ENCODE measurements at regions of chr1 and their contacts with region 1.

Region 1: DNA sequence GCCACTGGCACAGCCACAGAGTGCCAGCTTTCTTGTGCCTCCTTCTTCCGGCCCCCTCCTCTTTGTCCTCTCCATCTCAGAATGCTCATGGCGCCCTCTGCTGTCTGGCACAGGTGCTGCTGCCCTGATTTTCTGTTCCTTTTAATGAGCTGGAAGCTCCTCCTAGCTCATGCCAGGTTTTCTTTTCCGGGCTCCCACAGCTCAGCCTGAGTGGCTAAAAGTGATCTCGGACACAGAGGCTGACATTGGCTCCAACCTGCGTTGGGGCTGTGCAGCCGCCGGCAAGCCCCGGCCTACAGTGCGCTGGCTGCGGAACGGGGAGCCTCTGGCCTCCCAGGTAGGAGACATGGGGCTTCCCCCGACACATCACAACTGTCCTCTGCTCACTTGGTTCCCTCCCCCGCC is 18.7 kb downstream of the CNTN2 start:
- DNase-seq: peak; percentile 71
- H3K4me3 ChIP-seq: no peak overlapping the region
- H3K27ac ChIP-seq: no peak overlapping the region
- H3K4me1 ChIP-seq: no peaks in the 10 kb centered on the region
- H3K27me3 ChIP-seq: peaks cover 0 to 2% of the 10 kb centered on the region in 2 experiments
- CTCF ChIP-seq: peak; percentile 80 to 89
- POLR2A ChIP-seq: no peak

Region 2: DNA sequence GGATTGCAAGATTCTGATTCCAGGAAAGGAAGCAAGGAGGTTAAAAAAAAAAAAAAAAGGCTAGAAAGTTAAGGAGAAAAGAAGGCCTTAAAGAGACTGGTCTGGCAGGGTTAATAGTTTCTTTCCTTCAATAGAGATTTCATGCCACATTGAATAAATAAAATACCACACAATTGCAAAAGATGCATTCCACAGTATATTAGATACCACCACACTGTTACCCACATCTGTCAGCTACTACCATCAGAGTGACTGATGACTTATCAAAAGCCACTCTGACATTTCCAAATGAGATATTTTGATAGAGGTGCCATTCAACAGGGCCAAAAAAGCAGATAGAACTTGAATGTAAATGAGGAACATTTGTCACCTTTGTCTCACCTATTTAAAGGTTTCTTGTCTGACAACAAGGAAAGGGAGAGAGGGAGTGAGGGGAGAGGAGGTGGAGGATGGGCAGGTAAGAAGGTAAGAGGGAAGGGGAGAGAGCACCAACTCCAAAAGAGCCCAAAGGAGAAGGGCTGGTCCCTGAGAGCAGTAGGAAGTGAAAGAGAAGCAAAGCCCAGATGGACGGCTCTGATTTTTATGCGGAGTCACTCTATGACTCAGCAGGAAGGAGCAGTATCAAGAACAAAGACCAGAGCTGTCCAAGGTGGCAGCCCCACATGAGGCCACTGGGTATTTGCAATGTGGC is 414.4 kb before region 1 on chr1:
- CTCF ChIA-PET with region 1: no interaction called
- POLR2A ChIA-PET with region 1: no interaction called
- dilution Hi-C with region 1: no loop called
- intact Hi-C with region 1: no loop called
- DNase-seq: peak; percentile 58
- H3K4me3 ChIP-seq: no peak overlapping the region
- H3K27ac ChIP-seq: no peak overlapping the region
- H3K4me1 ChIP-seq: no peaks in the 10 kb centered on the region
- H3K27me3 ChIP-seq: peaks cover 10 to 14% of the 10 kb centered on the region in 2 experiments
- CTCF ChIP-seq: no peak
- POLR2A ChIP-seq: no peak

Region 3: DNA sequence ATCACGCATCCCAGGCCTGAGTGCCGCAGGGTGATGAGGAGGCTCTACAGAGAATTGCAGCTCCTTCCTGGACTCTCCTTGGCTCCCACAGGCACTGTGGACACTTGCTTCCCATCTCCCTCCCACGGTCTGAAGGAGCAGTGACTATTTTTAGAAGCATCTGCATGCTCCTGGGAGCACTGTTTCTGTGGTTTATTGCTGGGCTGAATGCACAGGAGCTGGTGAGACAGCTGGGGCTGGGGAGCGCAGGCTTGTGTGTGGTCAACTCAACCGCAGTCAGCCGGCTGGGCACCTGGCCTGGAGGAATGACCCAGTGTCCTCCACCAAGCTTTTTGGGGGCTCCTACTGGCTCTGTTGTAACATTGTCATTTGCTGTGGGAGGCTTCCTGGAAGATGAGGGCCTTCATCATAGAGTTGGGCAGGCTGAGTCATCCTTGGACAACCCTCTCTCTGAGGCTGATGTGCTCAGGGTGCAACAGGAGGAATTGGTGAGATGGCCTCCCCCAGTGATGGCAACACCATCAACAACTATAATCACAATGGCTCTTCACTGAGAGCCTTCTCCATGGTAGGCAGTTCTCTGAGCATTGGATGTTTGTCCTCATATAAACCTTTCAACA is 189.3 kb before region 1 on chr1:
- CTCF ChIA-PET with region 1: no interaction called
- POLR2A ChIA-PET with region 1: no interaction called
- dilution Hi-C with region 1: no loop called
- intact Hi-C with region 1: no loop called
- DNase-seq: no peak
- H3K4me3 ChIP-seq: no peak overlapping the region
- H3K27ac ChIP-seq: no peak overlapping the region
- H3K4me1 ChIP-seq: no peaks in the 10 kb centered on the region
- H3K27me3 ChIP-seq: peaks cover 0 to 2% of the 10 kb centered on the region in 2 experiments
- CTCF ChIP-seq: no peak
- POLR2A ChIP-seq: no peak

Region 4: GRCh38 chr1:204902671-204903070 is 159.0 kb before region 1 on chr1:
- CTCF ChIA-PET with region 1: no interaction called
- POLR2A ChIA-PET with region 1: no interaction called
- dilution Hi-C with region 1: no loop called
- intact Hi-C with region 1: no loop called
- DNase-seq: no peak
- H3K4me3 ChIP-seq: no peak overlapping the region
- H3K27ac ChIP-seq: no peak overlapping the region
- H3K4me1 ChIP-seq: no peaks in the 10 kb centered on the region
- H3K27me3 ChIP-seq: peaks cover 2 to 4% of the 10 kb centered on the region in 2 experiments
- CTCF ChIP-seq: no peak
- POLR2A ChIP-seq: no peak

Region 5: GRCh38 chr1:204975570-204976235 is 86.0 kb before region 1 on chr1:
- CTCF ChIA-PET with region 1: interaction called, 101 read pairs
- POLR2A ChIA-PET with region 1: no interaction called
- dilution Hi-C with region 1: no loop called
- intact Hi-C with region 1: loop called (anchors 1 kb)
- DNase-seq: peak; percentile 31
- H3K4me3 ChIP-seq: no peak overlapping the region
- H3K27ac ChIP-seq: no peak overlapping the region
- H3K4me1 ChIP-seq: peaks cover 14% of the 10 kb centered on the region
- H3K27me3 ChIP-seq: peaks cover 0 to 2% of the 10 kb centered on the region in 2 experiments
- CTCF ChIP-seq: peak; percentile 62 to 73
- POLR2A ChIP-seq: no peak

Region 6: GRCh38 chr1:205014783-205015182 is 46.9 kb before region 1 on chr1:
- CTCF ChIA-PET with region 1: interaction called, 20 read pairs
- POLR2A ChIA-PET with region 1: no interaction called
- dilution Hi-C with region 1: no loop called
- intact Hi-C with region 1: no loop called
- DNase-seq: no peak
- H3K4me3 ChIP-seq: no peak overlapping the region
- H3K27ac ChIP-seq: no peak overlapping the region
- H3K4me1 ChIP-seq: no peaks in the 10 kb centered on the region
- H3K27me3 ChIP-seq: peaks cover 3% of the 10 kb centered on the region in 2 experiments
- CTCF ChIP-seq: no peak
- POLR2A ChIP-seq: no peak

Region 7: DNA sequence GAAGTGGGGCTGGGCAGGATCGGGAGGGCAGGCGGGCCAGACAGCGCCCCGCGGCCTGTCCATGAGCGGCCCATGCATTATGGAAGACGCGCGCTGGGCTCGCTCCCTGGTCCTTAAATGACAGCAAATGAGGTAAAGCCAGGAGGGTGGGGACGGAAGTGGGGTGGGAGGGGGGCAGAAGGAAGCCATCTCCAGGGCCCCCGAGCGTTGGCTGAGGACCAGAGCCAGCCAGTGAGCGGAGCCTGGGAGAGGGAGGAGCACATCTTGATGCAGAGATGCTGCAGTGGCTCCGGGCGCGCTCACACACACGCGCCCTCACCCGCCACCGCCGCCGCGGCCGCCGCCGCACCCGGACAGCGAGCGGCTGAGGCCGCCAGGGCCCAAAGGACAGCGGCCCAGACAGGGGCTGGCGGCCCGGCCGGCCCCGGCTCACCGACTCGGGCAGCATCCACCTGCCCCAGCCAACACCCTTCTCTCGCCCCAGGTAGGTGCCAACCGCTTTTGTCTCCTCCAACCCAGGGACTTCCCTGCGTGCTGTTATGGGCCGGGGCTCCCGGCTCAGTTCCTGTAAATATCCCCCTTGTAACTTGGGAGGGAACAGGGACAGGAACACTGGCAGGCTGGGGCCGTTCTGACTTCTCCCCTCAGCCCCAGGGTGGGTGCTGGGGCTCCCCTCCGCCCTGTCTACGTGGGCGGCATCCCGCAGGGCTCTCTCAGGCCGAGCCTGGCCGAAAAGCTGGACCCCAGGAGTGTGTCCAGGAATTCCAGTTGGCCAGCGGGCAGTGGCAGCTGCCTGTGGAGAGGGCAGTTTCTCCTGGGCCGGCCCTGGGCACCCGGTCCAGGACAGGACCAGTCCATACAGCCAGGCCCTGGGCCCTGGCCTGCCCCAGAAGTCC is 18.5 kb before region 1 on chr1 and contains the start of gene CNTN2:
- CTCF ChIA-PET with region 1: interaction called, 24 read pairs
- POLR2A ChIA-PET with region 1: no interaction called
- dilution Hi-C with region 1: no loop called
- intact Hi-C with region 1: no loop called
- DNase-seq: no peak
- H3K4me3 ChIP-seq: no peak within 1 kb of the TSS
- H3K27ac ChIP-seq: no peak within 1 kb of the TSS
- H3K4me1 ChIP-seq: no peaks in the 10 kb centered on the region
- H3K27me3 ChIP-seq: peaks cover 37 to 51% of the 10 kb centered on the region in 2 experiments
- CTCF ChIP-seq: no peak
- POLR2A ChIP-seq: no peak
- total RNA-seq, gene CNTN2: not detected in 2 replicates

Region 8: DNA sequence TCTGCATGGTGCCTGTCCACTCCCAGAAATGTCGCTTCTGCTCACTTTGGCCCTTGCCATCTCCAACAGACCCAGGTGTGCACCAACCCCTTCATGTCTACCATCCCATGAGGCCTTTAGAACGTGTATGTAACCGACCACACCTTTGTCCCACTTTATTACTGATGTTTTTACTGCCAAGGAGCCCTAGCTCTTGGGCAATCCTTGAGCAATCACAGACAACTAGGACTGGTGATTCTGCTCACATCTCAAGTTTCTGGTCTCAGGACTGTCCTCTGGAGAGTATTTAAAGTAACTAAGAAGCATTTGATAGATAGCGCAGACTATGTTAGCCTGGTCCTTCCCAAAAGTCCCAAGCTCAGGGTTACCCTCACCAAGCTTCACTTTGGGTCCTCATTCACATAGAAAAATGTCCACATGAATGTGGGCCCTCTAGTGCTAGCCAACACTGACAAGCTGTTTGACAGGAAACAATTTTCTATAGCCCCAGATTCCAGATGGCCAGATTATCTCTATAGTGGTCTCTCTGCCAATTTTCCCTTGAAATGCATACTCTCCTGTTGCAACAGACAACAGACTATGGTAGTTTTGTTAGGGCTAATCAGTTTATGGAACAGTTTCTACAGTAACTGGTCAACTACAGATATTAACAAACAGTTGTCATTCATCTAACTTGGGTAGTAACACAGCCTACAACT is 29.5 kb after region 1 on chr1:
- CTCF ChIA-PET with region 1: interaction called, 24 read pairs
- POLR2A ChIA-PET with region 1: no interaction called
- dilution Hi-C with region 1: no loop called
- intact Hi-C with region 1: no loop called
- DNase-seq: no peak
- H3K4me3 ChIP-seq: no peak overlapping the region
- H3K27ac ChIP-seq: no peak overlapping the region
- H3K4me1 ChIP-seq: no peaks in the 10 kb centered on the region
- H3K27me3 ChIP-seq: no peaks in the 10 kb centered on the region
- CTCF ChIP-seq: no peak
- POLR2A ChIP-seq: no peak

Region 9: DNA sequence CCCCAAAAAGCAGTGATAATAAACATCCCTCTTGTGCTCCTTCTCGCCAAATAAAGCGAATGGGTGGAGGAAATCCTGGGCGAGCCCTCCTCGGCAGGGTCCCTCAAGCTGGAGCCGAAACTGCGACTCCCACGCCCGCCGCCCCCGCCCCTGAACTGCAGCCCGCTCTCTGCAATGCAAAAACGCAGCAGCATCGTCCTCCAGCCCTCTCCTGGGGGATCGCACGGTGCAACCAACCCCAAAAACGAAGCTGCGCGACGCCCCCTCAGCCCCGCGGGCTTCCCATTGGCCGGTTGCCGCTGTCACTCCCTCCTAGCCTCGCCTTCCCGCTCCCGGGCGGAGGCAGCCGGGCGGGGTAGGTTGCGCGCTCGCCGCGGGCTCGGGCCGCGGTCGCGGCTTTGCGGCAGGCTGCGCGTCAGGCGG is 165.9 kb after region 1 on chr1 and contains the start of gene TMCC2:
- CTCF ChIA-PET with region 1: interaction called, 11 read pairs
- POLR2A ChIA-PET with region 1: no interaction called
- dilution Hi-C with region 1: no loop called
- intact Hi-C with region 1: no loop called
- DNase-seq: peak; percentile 81
- H3K4me3 ChIP-seq: peak within 1 kb of the TSS; percentile 49 to 64 (median 60)
- H3K27ac ChIP-seq: no peak within 1 kb of the TSS
- H3K4me1 ChIP-seq: peaks cover 17% of the 10 kb centered on the region
- H3K27me3 ChIP-seq: peaks cover 17 to 36% of the 10 kb centered on the region in 2 experiments
- CTCF ChIP-seq: peak in 1 of 2 donors; percentile 6
- POLR2A ChIP-seq: no peak
- total RNA-seq, gene TMCC2: 2.0 and 2.1 TPM in 2 replicates